ENCODE measurements at regions of chr9 and their contacts with region 1.

Region 1: DNA sequence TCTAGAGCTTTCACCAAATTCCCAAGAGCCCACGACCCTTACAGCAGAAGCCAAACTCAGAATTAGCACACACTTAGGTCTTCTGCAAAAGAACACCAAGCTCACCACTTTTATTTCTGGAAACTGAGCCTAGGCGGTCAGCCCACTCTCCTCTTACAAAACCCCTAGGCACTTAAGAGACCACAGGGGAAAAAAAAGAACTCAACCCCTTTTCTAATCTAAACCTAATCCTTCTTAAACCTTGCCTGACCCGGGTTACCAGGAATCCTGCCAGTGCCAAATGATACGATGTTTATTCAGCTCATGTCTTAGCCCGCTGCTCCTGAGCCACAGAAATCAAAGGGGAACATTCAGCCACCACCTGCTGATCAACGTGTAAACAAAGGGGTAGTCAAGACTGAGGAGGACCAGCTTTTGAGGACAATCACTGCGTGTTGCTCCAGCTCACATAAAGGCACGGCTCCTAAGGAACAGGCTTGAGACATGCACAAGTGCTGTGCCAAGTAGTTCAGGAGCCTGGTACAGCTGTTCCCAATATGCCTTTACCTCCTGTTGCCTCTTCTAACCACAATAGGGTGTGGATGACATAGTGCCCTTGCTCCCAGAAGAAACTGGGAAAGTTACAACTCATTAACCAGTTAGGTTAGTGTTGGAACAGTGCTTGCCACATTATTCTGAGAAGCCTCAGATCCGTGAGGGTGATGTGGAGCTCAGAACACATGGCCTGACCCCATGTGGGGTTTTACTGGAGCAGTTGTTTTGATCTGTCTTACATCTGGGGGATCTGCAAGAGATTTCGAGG is 49.3 kb downstream of the ZFAND5 start:
- DNase-seq: peak; percentile 52
- ATAC-seq: peak; percentile 75
- H3K4me3 ChIP-seq: peak overlapping the region; percentile 47; the same call in 1 of the 2 replicates
- H3K27ac ChIP-seq: peak overlapping the region; percentile 70
- H3K4me1 ChIP-seq: peaks cover 20% of the 10 kb centered on the region
- H3K27me3 ChIP-seq: no peaks in the 10 kb centered on the region
- CTCF ChIP-seq: no peak

Region 2: GRCh38 chr9:72271613-72272478 is 43.9 kb before region 1 on chr9:
- CTCF ChIA-PET with region 1: no interaction called
- POLR2A ChIA-PET with region 1: no interaction called
- intact Hi-C with region 1: no loop called
- DNase-seq: peak; percentile 72
- ATAC-seq: peak; percentile 53; the same call in 1 of the 2 replicates
- H3K4me3 ChIP-seq: no peak overlapping the region
- H3K27ac ChIP-seq: no peak overlapping the region
- H3K4me1 ChIP-seq: no peaks in the 10 kb centered on the region
- H3K27me3 ChIP-seq: no peaks in the 10 kb centered on the region; the same call in 1 of the 2 replicates
- CTCF ChIP-seq: peak; percentile 81

Region 3: GRCh38 chr9:72351538-72352453 is 36.1 kb after region 1 on chr9:
- CTCF ChIA-PET with region 1: no interaction called
- POLR2A ChIA-PET with region 1: no interaction called
- intact Hi-C with region 1: loop called (anchors 5 kb)
- DNase-seq: peak; percentile 84
- ATAC-seq: peak; percentile 99
- H3K4me3 ChIP-seq: no peak overlapping the region
- H3K27ac ChIP-seq: peak overlapping the region; percentile 39
- H3K4me1 ChIP-seq: peaks cover 20% of the 10 kb centered on the region
- H3K27me3 ChIP-seq: no peaks in the 10 kb centered on the region
- CTCF ChIP-seq: no peak

Region 4: GRCh38 chr9:72371151-72371550 is 55.4 kb after region 1 on chr9:
- CTCF ChIA-PET with region 1: no interaction called
- POLR2A ChIA-PET with region 1: no interaction called
- intact Hi-C with region 1: no loop called
- DNase-seq: no peak
- ATAC-seq: no peak
- H3K4me3 ChIP-seq: no peak overlapping the region
- H3K27ac ChIP-seq: no peak overlapping the region
- H3K4me1 ChIP-seq: no peaks in the 10 kb centered on the region
- H3K27me3 ChIP-seq: no peaks in the 10 kb centered on the region
- CTCF ChIP-seq: no peak